Activated CD4-positive, alpha-beta memory T cell treated with anti-CD3 and anti-CD28 coated beads, Interleukin-2, amount 10 ng/mL, durations not matched to agents 7 days and 5 days (primary cell): ENCODE measurements at regions of chr11 and their contacts with region 1.

Region 1: DNA sequence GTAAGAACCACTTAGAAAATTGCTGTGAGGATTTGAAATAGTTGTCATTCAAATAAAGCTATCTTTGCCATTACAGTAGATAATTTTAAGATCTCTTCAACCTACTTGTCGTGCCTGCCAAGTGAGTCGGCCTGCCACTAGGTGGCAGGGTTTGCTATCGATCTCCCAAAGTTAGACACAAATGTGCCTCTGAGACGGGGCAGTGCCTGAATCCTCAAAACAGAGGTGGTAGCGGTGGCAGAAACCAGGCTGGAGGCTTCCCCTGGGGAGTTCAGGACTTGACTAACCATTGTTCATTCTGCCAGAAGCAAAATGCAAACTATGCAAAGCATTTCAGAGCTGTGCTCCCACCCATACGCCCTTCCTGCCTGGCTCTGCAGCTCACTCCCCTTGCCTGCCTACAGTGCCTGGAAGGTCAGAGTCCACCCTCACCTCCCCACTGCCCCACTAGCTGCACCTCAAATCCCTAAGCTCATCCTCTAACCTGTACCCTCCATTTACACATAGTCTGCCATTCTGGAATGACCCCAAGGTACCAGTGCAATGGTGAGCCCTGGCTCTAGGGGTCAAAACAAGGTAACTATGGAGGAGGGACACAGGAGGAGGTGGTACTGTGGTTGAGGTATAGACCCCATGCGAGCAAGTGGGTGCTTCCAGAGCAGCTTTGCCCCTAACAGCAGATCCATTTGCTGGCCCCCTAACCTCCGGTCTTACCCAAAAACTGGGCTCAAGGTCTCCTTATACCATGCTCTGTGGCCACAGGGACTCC is 82.1 kb downstream of the C11orf58 start:
- DNase-seq: peak; percentile 74
- H3K4me3 Mint-ChIP-seq: no peak overlapping the region
- H3K27ac Mint-ChIP-seq: no peak overlapping the region
- H3K4me1 Mint-ChIP-seq: peaks cover 4% of the 10 kb centered on the region
- H3K27me3 Mint-ChIP-seq: no peaks in the 10 kb centered on the region

Region 2: DNA sequence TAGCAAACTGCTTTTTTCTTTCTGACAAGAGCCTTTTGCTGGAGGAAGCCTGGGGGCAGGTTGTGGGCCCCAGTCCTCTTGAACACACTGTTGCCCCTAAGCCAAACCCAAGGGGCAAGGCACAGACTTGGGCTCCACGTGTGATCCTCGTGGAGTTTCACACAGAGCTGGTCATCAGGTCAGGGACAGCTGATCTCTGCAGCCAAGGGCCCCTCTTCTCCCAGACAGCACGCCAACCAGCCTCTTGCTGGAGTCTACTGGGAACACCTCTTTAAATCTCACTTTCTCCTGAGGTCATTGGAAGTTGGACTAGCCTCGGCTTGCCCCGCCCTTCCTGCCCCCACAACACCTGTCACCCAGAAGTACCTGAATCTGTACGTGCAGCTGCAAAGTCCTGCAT is 42.2 kb before region 1 on chr11:
- CTCF ChIA-PET with region 1: no interaction called
- POLR2A ChIA-PET with region 1: no interaction called
- DNase-seq: no peak
- H3K4me3 Mint-ChIP-seq: no peak overlapping the region
- H3K27ac Mint-ChIP-seq: no peak overlapping the region
- H3K4me1 Mint-ChIP-seq: peaks cover 2% of the 10 kb centered on the region
- H3K27me3 Mint-ChIP-seq: peaks cover 3% of the 10 kb centered on the region

Region 3: GRCh38 chr11:16809886-16810668 is 10.4 kb before region 1 on chr11:
- CTCF ChIA-PET with region 1: interaction called, 24 read pairs
- POLR2A ChIA-PET with region 1: no interaction called
- DNase-seq: no peak
- H3K4me3 Mint-ChIP-seq: no peak overlapping the region
- H3K27ac Mint-ChIP-seq: no peak overlapping the region
- H3K4me1 Mint-ChIP-seq: peaks cover 8% of the 10 kb centered on the region
- H3K27me3 Mint-ChIP-seq: no peaks in the 10 kb centered on the region

Region 4: DNA sequence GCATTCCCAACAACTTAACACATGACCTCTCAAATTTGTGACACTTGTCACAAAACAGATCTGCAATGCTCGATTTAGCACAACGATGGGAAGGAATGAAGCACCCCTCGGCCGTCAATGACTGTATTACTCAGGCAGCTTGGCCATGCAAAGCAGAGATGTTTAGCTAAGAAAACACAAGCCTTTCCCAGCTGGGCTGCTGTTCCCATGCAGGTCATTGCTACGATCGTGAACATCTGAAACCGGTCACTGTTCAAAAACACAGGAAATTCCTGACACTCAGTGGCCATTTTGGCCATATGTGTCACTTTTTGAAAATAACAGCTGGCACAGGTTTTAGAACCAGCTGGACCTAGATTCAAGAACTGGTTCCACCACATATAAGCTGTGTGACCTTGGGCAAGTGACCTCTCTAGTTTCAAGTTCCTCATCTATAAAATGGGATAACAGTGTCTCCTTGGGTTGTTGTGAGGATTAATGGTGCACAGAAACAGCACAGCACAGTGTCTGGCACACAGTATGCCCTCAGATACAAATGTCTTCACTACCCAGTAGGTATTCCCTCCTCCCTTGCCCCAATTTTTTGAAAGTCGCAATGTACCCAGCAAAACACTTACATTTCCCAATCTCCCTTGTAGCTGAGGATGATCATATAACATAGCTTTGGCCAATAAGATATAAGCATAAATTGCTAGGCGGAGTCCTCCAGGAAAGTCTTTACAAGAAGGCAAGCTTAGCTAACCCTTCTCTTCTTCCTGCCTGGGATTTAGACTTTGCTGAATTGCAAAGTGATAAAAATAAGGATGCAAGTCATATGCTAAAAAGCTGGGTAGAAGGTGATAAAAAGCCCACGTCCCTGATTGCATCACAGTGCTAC is 11.0 kb after region 1 on chr11:
- CTCF ChIA-PET with region 1: interaction called, 24 read pairs
- POLR2A ChIA-PET with region 1: no interaction called
- DNase-seq: no peak
- H3K4me3 Mint-ChIP-seq: no peak overlapping the region
- H3K27ac Mint-ChIP-seq: no peak overlapping the region
- H3K4me1 Mint-ChIP-seq: peaks cover 4% of the 10 kb centered on the region
- H3K27me3 Mint-ChIP-seq: no peaks in the 10 kb centered on the region

Region 5: GRCh38 chr11:16871368-16871767 is 50.9 kb after region 1 on chr11:
- CTCF ChIA-PET with region 1: no interaction called
- POLR2A ChIA-PET with region 1: no interaction called
- DNase-seq: no peak
- H3K4me3 Mint-ChIP-seq: no peak overlapping the region
- H3K27ac Mint-ChIP-seq: no peak overlapping the region
- H3K4me1 Mint-ChIP-seq: no peaks in the 10 kb centered on the region
- H3K27me3 Mint-ChIP-seq: no peaks in the 10 kb centered on the region

Region 6: DNA sequence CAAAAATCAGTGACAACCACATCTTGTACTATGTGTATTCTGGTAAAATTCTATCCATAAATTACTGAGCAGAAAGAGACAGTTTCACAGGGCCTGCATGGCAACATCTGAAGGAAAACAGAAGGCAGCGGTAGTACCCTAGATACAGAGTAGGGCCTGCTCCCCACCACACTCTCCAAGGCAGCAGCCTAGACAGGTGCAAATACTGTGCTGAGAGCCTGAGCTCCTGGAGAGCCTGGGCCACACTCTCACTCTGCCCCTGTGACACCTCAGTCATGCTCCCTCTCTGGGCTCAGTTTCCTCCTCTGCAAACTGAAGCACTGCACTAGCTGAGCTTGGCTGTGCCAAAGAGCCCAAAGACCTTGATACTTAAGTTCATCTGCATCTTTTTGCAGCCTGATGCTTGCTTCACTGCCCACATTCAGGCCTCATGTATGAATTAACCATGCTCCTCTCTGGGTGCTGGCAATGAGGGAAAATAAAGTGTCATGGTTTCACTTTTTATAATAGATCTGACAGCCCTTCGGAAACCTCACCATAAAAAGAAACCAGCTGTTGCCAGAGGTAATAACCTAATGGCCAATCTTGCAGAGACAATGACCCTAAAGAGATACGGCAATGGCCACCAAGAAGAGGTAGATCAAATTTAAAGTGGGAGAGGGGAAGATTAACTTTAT is 89.0 kb after region 1 on chr11:
- CTCF ChIA-PET with region 1: no interaction called
- POLR2A ChIA-PET with region 1: no interaction called
- DNase-seq: no peak
- H3K4me3 Mint-ChIP-seq: no peak overlapping the region
- H3K27ac Mint-ChIP-seq: peak overlapping the region; percentile 31
- H3K4me1 Mint-ChIP-seq: peaks cover 22% of the 10 kb centered on the region
- H3K27me3 Mint-ChIP-seq: no peaks in the 10 kb centered on the region

Region 7: GRCh38 chr11:17063171-17064002 is 242.9 kb after region 1 on chr11:
- CTCF ChIA-PET with region 1: interaction called, 24 read pairs
- POLR2A ChIA-PET with region 1: no interaction called
- DNase-seq: peak; percentile 55
- H3K4me3 Mint-ChIP-seq: no peak overlapping the region
- H3K27ac Mint-ChIP-seq: no peak overlapping the region
- H3K4me1 Mint-ChIP-seq: no peaks in the 10 kb centered on the region
- H3K27me3 Mint-ChIP-seq: no peaks in the 10 kb centered on the region